Activated CD4-positive, alpha-beta T cell treated with anti-CD3 and anti-CD28 coated beads for 36 hours (primary cell): ENCODE measurements at regions of chr14 and their contacts with region 1.

Region 1: DNA sequence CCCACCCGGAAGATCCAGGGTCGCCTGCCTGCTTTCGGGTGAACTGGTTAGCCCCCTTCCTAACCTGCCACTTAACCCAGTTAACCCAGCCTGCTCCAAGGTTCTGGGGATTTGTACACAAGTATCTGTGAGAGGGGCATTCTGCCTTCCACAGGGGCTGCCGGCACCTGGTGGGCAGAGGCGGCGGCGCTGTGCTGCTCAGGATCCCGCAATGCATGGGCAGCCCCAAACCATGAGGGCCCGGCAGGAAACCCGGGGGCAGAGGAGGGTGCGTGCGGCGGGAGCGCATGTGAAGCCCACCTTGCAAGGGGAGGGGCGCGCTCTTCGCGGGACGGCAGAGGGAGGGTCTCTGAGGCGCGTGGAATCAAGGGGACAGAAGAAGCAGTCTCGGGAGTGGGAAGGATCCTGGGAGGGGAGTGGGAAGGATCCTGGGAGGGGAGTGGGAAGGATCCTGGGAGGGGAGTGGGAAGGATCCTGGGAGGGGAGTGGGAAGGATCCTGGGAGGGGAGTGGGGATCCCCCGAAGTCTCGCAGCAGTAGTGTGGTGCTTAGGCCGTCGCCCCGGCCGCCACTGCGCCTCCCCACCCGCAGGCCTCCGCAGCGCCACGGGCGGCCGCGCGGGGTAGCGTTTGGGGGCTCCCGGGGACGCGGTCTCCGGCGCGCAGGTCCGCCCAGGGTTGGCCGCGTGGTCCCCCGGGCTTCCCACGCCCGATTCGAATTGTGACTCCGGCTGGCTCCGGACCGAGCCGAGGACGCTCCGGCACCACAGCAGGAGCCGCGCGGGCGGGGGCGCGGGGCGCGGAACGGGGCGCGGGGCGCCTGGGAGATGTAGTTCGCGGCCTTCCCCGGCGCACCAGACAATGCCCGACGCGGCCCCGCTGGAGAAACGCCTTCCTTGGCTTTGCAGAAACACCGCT is 4.9 kb upstream of the MTA1 start:
- DNase-seq: peak; percentile 81
- ATAC-seq: peak; percentile 85
- H3K4me3 Mint-ChIP-seq: peak overlapping the region; percentile 61
- H3K27ac Mint-ChIP-seq: no peak overlapping the region
- H3K4me1 Mint-ChIP-seq: peaks cover 11% of the 10 kb centered on the region
- H3K27me3 Mint-ChIP-seq: peaks cover 17% of the 10 kb centered on the region

Region 2: GRCh38 chr14:104723648-104724406 is 690.9 kb before region 1 on chr14 and contains the start of gene ADSS1:
- CTCF ChIA-PET with region 1: no interaction called
- POLR2A ChIA-PET with region 1: no interaction called
- intact Hi-C with region 1: no loop called
- DNase-seq: peak; percentile 73
- ATAC-seq: peak; percentile 72
- H3K4me3 Mint-ChIP-seq: peak within 1 kb of the TSS; percentile 57
- H3K27ac Mint-ChIP-seq: no peak within 1 kb of the TSS
- H3K4me1 Mint-ChIP-seq: no peaks in the 10 kb centered on the region
- H3K27me3 Mint-ChIP-seq: no peaks in the 10 kb centered on the region
- total RNA-seq, gene ADSS1: 2.2 to 3.2 TPM

Region 3: GRCh38 chr14:105168979-105169507 is 245.7 kb before region 1 on chr14:
- CTCF ChIA-PET with region 1: no interaction called
- POLR2A ChIA-PET with region 1: no interaction called
- intact Hi-C with region 1: no loop called
- DNase-seq: peak; percentile 69
- ATAC-seq: peak; percentile 55
- H3K4me3 Mint-ChIP-seq: peak overlapping the region; percentile 53
- H3K27ac Mint-ChIP-seq: no peak overlapping the region
- H3K4me1 Mint-ChIP-seq: peaks cover 4% of the 10 kb centered on the region
- H3K27me3 Mint-ChIP-seq: peaks cover 6% of the 10 kb centered on the region

Region 4: DNA sequence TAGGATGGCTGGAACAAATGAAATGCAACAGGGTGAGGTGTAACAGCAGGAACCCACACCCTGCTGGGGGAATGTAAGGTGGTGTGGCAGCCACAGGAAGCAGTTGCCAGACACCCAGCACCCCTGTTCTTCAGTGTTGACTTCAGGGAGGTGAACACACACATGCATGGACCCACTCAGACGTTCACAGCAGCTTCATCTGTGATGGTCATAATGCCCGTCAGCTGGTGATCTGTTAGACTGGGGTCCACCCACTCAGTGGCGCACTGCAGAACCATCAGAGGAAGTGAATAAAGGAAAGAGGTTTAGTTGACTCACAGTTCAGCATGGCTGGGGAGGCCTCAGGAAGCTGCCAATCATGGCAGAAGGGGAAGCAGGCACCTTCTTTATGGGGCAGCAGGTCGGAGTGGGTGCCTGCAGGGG is 39.1 kb before region 1 on chr14:
- CTCF ChIA-PET with region 1: interaction called, 4 read pairs
- POLR2A ChIA-PET with region 1: no interaction called
- intact Hi-C with region 1: loop called (anchors 2 to 5 kb)
- DNase-seq: peak; percentile 83
- ATAC-seq: peak; percentile 77
- H3K4me3 Mint-ChIP-seq: no peak overlapping the region
- H3K27ac Mint-ChIP-seq: peak overlapping the region; percentile 78
- H3K4me1 Mint-ChIP-seq: peaks cover 12% of the 10 kb centered on the region
- H3K27me3 Mint-ChIP-seq: no peaks in the 10 kb centered on the region

Region 5: DNA sequence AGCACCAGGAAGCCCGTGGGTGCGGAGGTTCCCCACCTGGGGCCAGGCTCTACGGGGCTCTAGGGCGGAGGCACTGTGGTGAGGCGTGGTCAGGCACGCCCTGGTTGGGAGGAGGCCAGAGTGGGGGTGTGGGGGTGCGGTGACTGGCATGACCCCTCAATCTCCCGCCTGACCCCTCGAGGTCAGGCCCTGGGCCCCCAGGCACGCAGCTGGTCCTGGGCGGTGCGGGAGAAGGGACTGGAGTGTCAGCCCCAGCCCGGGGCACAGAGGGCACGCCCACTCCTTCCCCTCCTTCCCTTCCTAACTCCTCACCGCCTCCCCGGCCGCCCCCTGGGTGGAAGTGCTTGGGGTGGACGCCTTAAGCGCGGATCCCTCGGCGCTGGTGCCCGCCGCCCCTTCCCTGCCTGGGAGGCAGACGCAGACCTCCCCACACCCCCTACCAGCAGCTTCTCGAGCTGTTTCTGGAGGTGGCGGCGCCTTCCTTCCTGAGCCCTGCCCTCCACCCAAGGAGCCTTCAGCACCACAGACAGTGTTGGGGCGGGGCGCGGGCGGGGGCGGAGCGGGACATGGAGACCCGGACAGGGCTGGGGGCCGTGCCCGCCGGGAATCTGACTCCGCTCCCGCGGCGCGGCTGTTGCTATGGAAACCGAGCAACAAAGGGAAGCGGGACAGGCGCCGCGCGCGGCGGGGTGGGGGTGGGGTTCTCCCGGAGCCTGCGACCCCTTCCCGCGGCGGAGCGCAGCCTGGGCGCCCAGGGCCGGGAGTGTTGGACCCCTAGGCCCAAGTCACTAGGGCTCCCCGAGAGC is 59.2 kb after region 1 on chr14:
- CTCF ChIA-PET with region 1: no interaction called
- POLR2A ChIA-PET with region 1: interaction called, 3 read pairs
- intact Hi-C with region 1: loop called in 1 of 2 experiments (anchors 1 kb)
- DNase-seq: peak; percentile 81
- ATAC-seq: peak; percentile 63
- H3K4me3 Mint-ChIP-seq: peak overlapping the region; percentile 33
- H3K27ac Mint-ChIP-seq: no peak overlapping the region
- H3K4me1 Mint-ChIP-seq: peaks cover 5% of the 10 kb centered on the region
- H3K27me3 Mint-ChIP-seq: no peaks in the 10 kb centered on the region

Region 6: DNA sequence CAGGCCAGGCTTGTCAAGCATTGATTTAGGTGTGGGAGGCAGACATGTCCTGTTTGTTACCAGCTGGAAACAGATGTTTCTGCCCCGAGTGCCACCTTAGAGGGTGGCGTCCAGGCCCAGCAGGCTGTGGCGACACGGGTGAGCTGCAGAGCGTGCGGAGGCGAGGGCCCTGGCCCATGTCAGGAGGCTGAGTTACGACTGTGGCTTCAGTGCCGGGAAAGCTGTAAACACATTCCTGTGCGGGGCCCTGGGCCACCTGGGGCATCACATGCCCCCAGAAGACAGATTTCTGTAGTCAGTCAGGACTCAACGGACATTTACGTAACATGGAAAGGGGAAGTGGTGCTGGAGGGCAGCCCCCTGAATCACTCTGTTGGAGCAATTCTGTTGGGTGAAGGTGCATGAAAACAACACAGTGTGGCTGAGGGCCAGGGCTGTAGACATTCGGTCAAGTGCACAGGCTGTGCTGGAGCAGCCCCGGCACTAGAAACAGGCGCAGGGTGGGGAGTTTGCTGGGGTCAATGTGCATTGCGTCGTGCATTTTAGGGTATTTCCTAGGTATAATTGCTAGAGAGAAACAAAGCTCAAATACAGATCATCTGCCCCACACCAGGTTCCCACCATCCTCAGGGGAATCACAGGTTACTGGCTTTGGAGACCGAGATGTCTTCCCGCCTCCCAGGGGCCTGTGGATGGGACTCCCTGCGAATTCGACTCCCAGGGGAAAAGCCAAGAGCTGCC is 403.4 kb after region 1 on chr14:
- CTCF ChIA-PET with region 1: no interaction called
- POLR2A ChIA-PET with region 1: no interaction called
- intact Hi-C with region 1: no loop called
- DNase-seq: no peak
- ATAC-seq: no peak
- H3K4me3 Mint-ChIP-seq: no peak overlapping the region
- H3K27ac Mint-ChIP-seq: no peak overlapping the region
- H3K4me1 Mint-ChIP-seq: no peaks in the 10 kb centered on the region
- H3K27me3 Mint-ChIP-seq: peaks cover 26% of the 10 kb centered on the region